Activated CD8-positive, alpha-beta T cell treated with anti-CD3 and anti-CD28 coated beads for 36 hours (primary cell): ENCODE measurements at regions of chr20 and their contacts with region 1.

Region 1: DNA sequence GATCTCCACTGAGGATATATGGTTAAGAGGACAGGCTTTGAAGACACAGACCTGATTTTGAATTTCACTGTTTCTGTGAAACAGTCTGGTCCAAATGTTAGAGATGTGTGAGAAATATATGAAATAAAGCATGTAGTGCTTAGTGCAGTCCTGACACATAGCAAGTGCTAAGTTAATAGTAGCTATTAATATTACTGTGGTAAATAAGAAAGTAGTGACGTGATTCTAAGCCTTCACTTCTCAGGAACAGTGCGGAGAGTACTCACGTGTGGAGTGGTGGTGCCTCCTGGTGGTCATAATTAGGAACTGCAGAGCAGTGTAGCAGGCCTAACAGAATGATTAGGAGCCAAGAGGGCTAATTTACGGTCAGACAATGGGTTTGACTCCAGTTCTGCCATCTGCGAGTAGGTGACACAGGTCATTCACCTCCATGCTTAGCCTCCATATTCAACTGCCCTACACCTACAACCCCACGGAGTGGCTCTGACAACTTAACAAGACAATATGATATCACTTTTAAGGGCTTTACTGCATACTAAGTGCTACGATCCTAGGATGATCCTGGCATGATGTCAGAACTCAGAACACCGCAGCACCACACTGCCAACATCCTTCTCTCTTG is 106.2 kb downstream of the JPH2 start:
- DNase-seq: peak; percentile 84
- ATAC-seq: peak; percentile 98
- H3K4me3 Mint-ChIP-seq: no peak overlapping the region
- H3K27ac Mint-ChIP-seq: no peak overlapping the region
- H3K4me1 Mint-ChIP-seq: peaks cover 6% of the 10 kb centered on the region
- H3K27me3 Mint-ChIP-seq: no peaks in the 10 kb centered on the region
- CTCF ChIP-seq: peak; percentile 98

Region 2: GRCh38 chr20:43456809-43457639 is 623.7 kb before region 1 on chr20:
- CTCF ChIA-PET with region 1: interaction called, 4 read pairs
- POLR2A ChIA-PET with region 1: no interaction called
- intact Hi-C with region 1: loop called (anchors 10 kb)
- DNase-seq: peak; percentile 94
- ATAC-seq: peak; percentile 81
- H3K4me3 Mint-ChIP-seq: peak overlapping the region; percentile 93
- H3K27ac Mint-ChIP-seq: peak overlapping the region; percentile 99
- H3K4me1 Mint-ChIP-seq: peaks cover 28% of the 10 kb centered on the region
- H3K27me3 Mint-ChIP-seq: peaks cover 4% of the 10 kb centered on the region
- CTCF ChIP-seq: no peak

Region 3: DNA sequence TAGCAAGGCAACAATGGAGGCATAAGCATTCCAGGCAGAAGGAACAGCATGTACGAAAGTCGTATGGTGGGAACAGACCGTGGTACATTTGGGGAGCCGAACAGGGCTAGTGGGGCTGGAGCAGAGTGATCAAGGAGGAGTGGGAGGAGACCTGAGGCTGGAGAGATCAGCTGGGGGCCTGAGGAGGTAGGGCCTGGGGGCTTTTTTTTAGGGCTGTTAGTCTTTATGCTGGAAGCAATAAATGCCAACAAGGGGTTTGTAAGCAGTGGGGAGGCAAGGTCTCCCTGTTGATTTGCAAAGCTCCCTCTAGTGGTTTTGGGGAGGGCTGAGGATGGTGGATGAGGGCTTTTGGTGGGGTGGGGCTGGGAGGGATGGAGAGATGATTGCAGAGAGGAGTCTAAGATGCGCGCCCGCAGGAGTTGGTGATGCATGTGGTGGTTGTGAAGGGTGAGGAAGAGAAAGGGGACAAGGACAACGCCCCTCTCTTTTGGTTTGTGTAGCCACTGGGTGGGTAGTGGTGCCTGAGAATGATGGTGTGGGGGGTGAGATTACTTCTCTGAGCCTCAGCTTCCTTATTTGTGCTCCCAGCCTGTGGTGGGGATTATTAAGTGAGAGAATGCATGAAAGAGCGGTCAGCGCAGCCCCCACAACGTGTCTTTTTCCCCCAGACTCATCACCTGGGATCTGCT is 240.2 kb before region 1 on chr20:
- CTCF ChIA-PET with region 1: no interaction called
- POLR2A ChIA-PET with region 1: no interaction called
- intact Hi-C with region 1: loop called (anchors 10 kb)
- DNase-seq: peak; percentile 69
- ATAC-seq: peak; percentile 21
- H3K4me3 Mint-ChIP-seq: no peak overlapping the region
- H3K27ac Mint-ChIP-seq: no peak overlapping the region
- H3K4me1 Mint-ChIP-seq: peaks cover 44% of the 10 kb centered on the region
- H3K27me3 Mint-ChIP-seq: peaks cover 28% of the 10 kb centered on the region
- CTCF ChIP-seq: peak; percentile 48

Region 4: GRCh38 chr20:44056010-44056698 is 24.6 kb before region 1 on chr20:
- CTCF ChIA-PET with region 1: interaction called, 49 read pairs
- POLR2A ChIA-PET with region 1: interaction called, 4 read pairs
- intact Hi-C with region 1: loop called (anchors 1 kb)
- DNase-seq: peak; percentile 79
- ATAC-seq: peak; percentile 98
- H3K4me3 Mint-ChIP-seq: no peak overlapping the region
- H3K27ac Mint-ChIP-seq: no peak overlapping the region
- H3K4me1 Mint-ChIP-seq: peaks cover 8% of the 10 kb centered on the region
- H3K27me3 Mint-ChIP-seq: no peaks in the 10 kb centered on the region
- CTCF ChIP-seq: peak; percentile 67

Region 5: DNA sequence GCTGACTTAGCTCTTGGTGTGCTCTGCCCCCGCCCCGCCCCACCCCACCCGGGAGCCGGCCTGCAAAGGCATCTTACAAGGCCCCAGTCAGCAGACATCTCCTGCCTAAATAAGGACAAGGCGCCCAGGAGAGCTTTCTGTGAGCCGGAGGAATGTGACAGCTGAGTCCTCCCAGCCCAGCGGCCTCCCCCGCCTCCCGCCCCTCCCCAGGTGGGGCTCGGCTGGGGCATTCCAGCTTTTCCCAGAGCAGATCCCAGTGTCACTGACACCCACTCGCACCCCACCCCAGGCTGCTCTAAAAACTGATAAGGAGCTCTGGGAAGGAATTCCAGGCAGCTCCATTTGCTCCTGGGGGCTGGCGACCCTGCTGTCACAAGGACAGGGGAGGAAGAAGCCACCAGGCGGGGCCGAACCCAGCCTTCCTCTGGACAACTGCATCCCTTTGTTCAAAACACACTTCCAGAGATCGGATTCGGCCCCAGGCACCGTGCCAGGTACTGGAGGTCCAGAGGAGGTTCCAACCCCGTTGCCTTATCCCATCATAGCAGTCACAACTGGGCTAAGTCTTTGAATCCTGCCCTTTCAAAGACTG is 56.5 kb after region 1 on chr20:
- CTCF ChIA-PET with region 1: no interaction called
- POLR2A ChIA-PET with region 1: no interaction called
- intact Hi-C with region 1: no loop called
- DNase-seq: no peak
- ATAC-seq: no peak
- H3K4me3 Mint-ChIP-seq: no peak overlapping the region
- H3K27ac Mint-ChIP-seq: no peak overlapping the region
- H3K4me1 Mint-ChIP-seq: no peaks in the 10 kb centered on the region
- H3K27me3 Mint-ChIP-seq: peaks cover 8% of the 10 kb centered on the region
- CTCF ChIP-seq: no peak

Region 6: DNA sequence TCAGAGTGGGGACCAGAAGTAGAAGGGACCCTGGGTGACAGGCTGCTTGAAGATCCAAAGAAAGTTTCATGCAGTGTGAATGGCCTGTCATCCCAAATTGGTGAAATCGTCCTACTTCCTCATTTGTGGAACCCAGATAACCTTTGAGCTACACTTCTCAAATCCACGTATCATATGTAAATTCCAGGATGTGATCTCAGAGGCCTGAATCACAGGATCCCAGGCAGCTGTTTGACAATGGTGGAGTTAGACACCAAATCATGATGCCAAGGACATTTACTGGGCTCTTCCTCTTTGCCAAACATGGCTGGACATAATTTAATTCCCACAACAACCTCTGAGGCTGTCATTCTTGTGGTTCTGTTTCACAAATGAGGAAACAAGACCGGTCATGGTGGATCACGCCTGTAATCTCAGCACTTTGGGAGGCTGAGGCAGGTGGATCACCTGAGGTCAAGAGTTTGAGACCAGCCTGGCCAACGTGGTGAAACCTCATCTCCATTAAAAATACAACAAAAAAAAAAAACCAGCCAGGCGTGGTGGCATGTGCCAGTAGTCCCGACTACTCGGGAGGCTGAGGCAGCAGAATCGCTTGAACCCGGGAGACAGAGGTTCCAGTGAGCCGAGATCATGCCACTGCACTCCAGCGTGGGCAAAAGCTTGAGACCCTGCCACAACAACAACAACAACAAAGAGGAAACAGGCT is 355.0 kb after region 1 on chr20:
- CTCF ChIA-PET with region 1: no interaction called
- POLR2A ChIA-PET with region 1: no interaction called
- intact Hi-C with region 1: no loop called
- DNase-seq: no peak
- ATAC-seq: no peak
- H3K4me3 Mint-ChIP-seq: no peak overlapping the region
- H3K27ac Mint-ChIP-seq: no peak overlapping the region
- H3K4me1 Mint-ChIP-seq: no peaks in the 10 kb centered on the region
- H3K27me3 Mint-ChIP-seq: peaks cover 7% of the 10 kb centered on the region
- CTCF ChIP-seq: no peak